ENCODE measurements at regions of chr1 and their contacts with region 1.

Region 1: DNA sequence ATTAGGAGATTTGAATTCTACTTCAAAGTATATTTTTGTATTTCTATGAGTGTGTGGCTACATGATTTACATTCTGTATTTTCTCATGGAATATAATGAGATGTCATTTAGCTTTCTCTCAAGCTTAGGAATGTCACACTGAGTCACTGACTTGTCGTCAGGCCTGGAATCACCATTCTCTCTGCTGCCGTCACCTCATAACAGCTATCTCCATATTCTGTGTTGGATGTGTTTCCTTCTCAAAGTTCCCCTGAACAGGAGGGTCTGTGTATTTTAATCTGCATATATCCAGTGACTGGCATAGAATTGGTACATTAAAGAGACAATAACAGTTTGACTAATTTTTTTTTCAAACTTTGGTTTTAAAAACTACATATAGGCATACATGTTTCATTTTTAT is 35.9 kb downstream of the LYPLAL1 start:
- DNase-seq: no peak
- H3K4me3 Mint-ChIP-seq: no peak overlapping the region
- H3K27ac Mint-ChIP-seq: no peak overlapping the region
- H3K4me1 Mint-ChIP-seq: no peaks in the 10 kb centered on the region
- H3K27me3 Mint-ChIP-seq: no peaks in the 10 kb centered on the region

Region 2: DNA sequence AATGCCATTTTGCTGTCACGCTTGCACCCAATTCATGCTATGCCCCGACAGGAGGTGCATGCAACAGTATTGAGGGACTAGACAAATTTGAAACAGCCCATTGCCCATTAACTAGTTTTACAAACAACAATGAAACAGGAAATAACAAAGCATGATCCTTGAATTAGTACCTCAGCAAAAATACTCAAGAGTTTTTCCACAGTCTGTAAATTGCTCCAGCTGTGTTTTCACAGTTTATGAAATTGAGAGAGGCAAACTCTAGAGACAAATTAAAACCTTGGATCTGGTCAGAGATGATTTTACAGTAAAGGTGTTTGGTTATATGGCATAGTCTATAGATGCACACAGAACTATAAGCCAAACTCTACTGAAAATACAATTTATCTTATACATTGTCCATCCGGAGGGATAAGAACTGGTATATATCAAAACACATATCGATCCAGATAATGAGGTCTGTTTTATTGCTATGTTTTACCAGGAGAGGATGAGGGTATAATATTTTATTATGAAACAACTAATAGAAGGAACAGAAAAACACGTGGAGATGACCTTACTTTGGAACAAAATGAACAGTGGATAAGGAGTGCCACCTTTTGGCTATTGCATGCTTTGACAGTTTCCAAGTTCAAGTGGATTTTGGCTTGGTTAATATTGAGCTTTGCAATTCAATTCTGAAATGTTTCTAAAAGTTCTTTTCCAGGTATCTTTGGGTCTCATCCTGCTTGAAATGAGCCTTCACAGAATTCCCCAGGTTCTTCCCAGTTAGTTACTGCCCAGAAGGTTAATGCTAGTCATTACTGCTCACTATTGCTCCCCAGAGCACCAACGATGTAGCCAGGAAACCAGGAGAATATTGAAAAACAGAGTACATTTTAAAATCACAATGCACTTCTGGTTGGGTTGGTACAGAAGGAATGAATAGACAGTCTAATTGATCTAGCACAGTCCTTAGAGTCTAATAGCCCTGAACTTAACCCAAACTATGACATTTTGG is 357.7 kb after region 1 on chr1:
- intact Hi-C with region 1: loop called (anchors 10 kb)
- DNase-seq: no peak
- H3K4me3 Mint-ChIP-seq: no peak overlapping the region
- H3K27ac Mint-ChIP-seq: no peak overlapping the region
- H3K4me1 Mint-ChIP-seq: no peaks in the 10 kb centered on the region
- H3K27me3 Mint-ChIP-seq: no peaks in the 10 kb centered on the region

Region 3: GRCh38 chr1:219660666-219661463 is 451.3 kb after region 1 on chr1:
- intact Hi-C with region 1: loop called (anchors 10 kb)
- DNase-seq: peak; percentile 83
- H3K4me3 Mint-ChIP-seq: peak overlapping the region; percentile 53
- H3K27ac Mint-ChIP-seq: no peak overlapping the region
- H3K4me1 Mint-ChIP-seq: peaks cover 2% of the 10 kb centered on the region
- H3K27me3 Mint-ChIP-seq: peaks cover 11% of the 10 kb centered on the region